ENCODE measurements at regions of chr16 and their contacts with region 1.

Region 1: DNA sequence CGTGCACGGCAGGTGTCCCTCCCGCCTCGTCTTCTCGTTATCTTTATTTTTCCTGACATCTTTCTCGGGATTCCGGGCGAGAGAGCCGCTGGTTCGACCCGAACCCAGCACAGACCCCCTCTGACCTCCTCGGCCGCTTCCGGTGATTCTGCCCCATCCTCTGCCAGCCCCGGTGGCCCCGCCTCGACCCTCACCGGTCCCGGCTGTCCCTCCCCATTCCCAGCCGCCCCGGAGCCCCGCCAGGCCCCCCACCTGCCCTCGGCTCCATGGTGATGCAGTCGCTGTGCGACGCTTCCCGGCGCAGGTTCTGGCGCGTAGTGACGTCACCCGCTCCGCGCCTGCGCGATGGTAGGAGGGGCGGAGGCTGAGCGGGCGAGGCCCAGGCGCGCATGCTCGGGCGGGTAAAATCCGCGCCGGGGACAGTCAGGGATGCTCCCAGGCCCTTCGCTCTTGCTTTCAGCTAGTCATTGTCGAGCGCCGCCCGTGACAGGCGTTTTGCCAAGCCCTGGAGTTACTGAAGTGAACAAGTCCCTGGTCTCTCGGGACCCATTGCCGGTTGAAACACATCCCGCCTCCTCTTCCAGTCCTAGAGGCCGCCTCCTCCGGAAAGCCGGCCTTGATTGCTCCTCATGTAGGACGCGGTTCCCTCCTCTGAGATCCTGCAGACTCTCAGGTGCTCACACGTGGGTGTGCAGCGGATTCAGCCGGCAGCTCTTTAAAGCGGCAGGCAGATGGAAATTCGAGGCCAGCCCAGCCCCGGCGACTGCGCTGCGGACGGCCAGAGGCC is at the start of gene MTHFSD:
- DNase-seq: peak; percentile 79
- H3K4me3 ChIP-seq: peak within 1 kb of the TSS; percentile 93
- CTCF ChIP-seq: no peak

Region 2: DNA sequence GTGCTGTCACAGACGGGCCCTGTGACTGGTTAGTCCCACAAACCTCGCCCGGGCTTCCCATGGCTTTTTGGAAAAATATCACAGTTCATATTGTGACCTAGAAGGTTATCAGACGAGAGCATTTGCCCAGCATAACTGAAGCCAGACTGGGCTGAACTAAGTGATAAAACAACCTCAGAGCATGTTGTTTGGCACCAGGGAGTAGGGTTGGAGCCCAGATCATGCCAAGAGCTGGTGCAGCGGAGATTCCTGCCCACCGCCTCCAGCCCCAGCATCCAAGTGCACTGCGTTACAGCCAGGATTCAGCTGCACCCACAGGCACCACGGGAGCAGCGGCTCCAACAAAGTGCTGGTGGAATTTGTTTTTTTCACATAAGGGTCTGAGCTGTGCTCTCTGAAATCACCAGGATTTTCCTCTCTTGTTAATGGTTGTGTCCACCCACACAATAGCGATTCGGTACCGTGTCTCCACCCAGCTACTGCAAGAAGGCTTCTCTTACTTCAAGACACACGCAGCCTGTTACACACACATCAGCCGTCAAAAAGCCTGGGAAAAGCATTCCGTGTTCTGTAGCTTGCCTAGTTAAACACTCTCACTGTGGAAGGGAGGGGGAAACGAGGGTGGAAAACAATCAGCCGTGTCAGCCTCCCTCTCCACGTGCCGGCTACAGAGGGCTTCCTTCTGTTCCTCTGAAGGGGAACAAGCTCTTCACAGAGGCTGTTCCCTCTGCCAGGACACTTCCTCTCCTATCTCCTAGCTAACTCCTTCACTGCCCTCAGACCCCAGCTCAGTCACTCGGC is 488.3 kb after region 1 on chr16:
- in situ Hi-C with region 1: loop called (anchors 25 kb)
- DNase-seq: no peak
- H3K4me3 ChIP-seq: no peak overlapping the region
- CTCF ChIP-seq: no peak

Region 3: GRCh38 chr16:87263471-87263961 is 708.4 kb after region 1 on chr16:
- in situ Hi-C with region 1: loop called (anchors 25 kb)
- DNase-seq: no peak
- H3K4me3 ChIP-seq: no peak overlapping the region
- CTCF ChIP-seq: no peak

Measured in astrocyte of the cerebellum (primary cell).